Dorsolateral prefrontal cortex (tissue), 120 donors: ENCODE measurements at regions of chr7 and their contacts with region 1.

Region 1: DNA sequence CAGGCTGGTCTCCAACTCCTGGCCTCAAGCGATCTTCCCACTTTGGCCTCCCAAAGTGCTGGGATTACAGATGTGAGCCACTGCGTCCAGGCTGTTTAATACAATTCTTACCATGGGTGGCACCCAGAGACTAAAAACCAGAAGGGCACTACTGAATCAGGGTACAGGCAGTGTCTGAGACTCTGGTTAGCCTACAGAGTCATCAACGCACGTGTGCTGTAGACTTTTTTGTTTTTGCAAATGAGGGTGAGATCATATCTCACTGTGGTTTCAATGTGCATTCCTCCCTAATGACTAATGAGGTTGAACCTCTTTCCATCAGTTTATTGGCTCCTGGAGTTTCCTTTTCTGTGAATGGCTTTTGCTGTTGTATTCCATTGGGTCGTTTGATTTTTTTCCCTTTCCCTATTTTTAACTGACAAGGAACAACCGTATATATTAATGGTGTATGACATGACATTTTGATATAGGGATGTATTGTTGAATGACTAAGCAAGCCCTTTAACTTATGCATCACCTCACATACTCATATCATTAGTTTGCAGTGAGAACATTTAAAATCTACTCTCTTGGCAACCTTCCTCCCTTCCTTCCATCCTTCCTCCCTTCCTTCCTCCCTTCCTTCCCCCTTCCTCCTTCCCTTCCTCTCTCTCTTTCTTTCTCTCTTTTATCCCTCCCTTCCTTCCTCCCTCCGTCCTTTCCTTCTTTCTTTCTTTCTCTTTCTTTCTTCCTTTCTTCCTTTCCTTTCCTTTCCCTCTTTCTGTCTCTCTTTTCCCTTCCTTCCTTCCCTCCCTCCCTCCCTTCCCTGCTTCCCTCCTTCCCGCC is 9.3 kb upstream of the METTL27 start:
- DNase-seq: no peak
- H3K4me3 ChIP-seq: no peak overlapping the region
- H3K27ac ChIP-seq: no peak overlapping the region
- H3K27me3 ChIP-seq: peaks cover 0 to 6% (median 0%) of the 10 kb centered on the region in 45 donors
- CTCF ChIP-seq: no peak

Region 2: DNA sequence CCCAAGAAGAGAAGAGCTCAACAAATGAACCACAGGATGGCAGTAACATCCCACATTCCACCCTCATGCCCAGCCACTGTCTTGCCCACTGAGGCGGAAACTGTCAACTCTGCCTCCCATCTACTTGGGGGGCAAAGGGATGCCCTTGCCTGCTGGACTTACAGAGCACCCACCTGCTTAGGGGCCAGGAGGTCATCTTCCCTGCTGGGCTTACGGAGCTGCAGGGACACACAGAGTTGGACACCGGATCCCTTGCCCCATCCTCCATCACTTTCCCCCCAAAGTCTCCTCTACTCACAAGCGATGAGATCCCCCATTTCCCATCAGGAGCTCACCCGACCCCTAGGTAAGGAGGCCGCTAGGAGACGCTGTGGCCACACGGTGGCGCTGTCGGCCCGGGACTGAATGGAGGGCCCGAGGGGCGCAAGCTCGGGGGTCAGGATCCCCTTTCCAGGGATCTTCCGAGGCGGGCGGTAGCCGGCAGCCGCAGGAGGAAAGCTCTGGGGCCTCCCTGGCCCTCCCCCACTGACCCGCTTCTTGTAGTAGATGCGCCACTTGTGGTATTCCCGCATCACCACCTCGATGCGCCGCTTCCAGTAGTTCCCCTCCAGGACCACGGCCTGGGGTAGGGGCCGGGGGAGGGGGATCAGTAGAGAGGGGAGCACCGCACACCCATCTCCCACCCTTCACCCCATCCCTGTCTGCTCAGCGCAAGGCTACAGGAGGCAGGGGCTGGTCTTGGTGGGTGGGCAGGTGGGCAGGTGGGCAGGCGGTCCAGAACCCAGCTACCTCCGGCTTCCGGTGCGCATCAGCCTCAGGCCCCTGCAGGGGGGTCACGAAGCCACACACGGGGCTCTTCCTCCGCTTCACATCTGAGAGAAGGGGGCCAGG is 244.6 kb before region 1 on chr7:
- intact Hi-C with region 1: loop called (anchors 2 to 10 kb)
- DNase-seq: peak in 4 of 10 donors; percentile 50 to 72 (median 58)
- H3K4me3 ChIP-seq: peak overlapping the region in 38 of 59 donors; percentile 2 to 58 (median 38)
- H3K27ac ChIP-seq: no peak overlapping the region
- H3K27me3 ChIP-seq: no peaks in the 10 kb centered on the region
- CTCF ChIP-seq: peak; percentile 54 to 98 (median 94)

Region 3: DNA sequence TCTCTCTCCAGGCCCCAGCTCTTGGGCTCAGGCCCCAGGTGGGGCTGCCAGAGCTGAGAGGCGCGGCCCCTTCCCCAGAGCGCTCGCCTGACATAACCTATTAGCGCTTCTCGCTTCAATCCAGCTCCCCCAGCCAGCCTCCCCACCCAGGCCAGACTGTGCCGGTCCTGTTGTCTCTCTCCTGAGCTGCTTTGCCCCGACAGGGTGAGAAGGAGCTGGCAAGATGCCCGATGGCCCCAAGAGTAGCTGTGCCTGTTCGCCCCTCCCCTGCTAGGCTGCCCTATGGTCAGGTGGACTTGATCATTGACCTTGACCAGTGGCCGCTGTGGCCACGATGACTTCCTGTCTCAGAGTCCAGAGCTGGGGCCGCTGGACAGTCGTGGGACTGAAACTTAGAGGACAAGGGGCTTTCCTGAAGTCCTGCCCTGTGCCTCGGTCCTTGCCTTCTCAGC is 18.4 kb after region 1 on chr7:
- intact Hi-C with region 1: no loop called
- DNase-seq: no peak
- H3K4me3 ChIP-seq: no peak overlapping the region
- H3K27ac ChIP-seq: no peak overlapping the region
- H3K27me3 ChIP-seq: no peaks in the 10 kb centered on the region
- CTCF ChIP-seq: no peak

Region 4: DNA sequence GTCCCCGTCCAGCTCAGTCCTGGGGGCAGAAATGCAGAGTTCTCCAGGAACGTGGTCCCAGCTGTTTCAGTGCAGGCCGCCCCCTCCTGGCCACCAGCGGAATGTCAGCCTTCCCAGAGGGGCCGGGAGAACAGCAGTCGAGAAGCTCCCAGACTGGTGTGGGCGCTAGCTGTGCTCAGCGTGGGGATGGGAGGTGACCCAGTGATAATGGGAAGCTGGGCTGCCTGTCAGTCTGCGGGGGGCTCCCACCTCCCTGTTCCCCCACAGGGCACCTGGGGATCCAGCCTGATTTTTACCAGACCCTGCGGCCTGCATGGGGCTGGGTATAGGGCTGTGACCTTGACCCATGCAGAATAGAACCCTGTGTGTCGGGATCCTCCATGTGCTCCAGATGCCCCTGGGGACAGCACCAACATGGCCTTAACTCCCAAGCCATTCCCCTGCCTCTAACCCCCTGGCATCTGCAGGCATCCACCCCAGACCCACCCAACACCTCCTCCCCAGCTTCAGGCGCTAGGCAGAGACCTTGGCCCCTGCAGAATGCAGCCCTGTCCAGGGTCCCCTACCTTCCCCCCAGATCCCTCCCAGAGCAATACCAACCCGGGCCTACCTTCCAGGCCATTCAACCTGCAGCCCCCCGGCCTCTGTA is 175.4 kb after region 1 on chr7:
- intact Hi-C with region 1: no loop called
- DNase-seq: peak; percentile 75 to 89 (median 85)
- H3K4me3 ChIP-seq: peak overlapping the region in 50 of 59 donors; percentile 22 to 72 (median 58)
- H3K27ac ChIP-seq: peak overlapping the region; percentile 27 to 93 (median 83)
- H3K27me3 ChIP-seq: peaks cover 0 to 4% (median 0%) of the 10 kb centered on the region in 45 donors
- CTCF ChIP-seq: peak; percentile 76 to 98 (median 94)